Aorta (tissue), 5 donors: ENCODE measurements at regions of chr16 and their contacts with region 1.

Region 1: GRCh38 chr16:8053437-8053836 is 536.9 kb downstream of the TMEM114 start:
- DNase-seq: no peak
- ATAC-seq: no peak
- H3K4me3 ChIP-seq: no peak overlapping the region
- H3K27ac ChIP-seq: no peak overlapping the region
- H3K4me1 ChIP-seq: no peaks in the 10 kb centered on the region
- H3K27me3 ChIP-seq: no peaks in the 10 kb centered on the region

Region 2: DNA sequence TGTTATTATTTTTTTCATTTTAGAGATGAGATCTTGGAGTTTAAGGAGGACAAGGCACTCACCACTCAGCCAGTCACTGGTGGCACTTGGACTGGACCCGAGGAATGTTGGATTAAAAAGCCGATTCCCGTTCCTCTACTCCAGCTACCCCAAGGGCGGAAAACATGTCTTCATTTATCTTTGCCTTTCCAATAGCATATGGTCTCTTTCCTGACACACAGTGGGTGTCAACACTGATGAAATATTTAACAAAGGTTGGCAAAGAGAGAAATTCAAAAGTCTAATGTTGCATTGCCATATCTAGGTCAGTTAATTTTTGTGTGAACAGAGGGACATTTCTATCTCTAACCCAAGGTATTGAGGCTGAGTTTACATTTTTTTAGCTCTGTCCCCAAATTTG is 261.1 kb before region 1 on chr16:
- intact Hi-C with region 1: loop called in 1 of 2 experiments (anchors 10 kb)
- DNase-seq: no peak
- ATAC-seq: no peak
- H3K4me3 ChIP-seq: no peak overlapping the region
- H3K27ac ChIP-seq: no peak overlapping the region
- H3K4me1 ChIP-seq: no peaks in the 10 kb centered on the region
- H3K27me3 ChIP-seq: no peaks in the 10 kb centered on the region